OCI-LY7 (cell line): ENCODE measurements at regions of chr18 and their contacts with region 1.

Region 1: GRCh38 chr18:52288403-52289004 is 51.5 kb upstream of the DCC start:
- DNase-seq: peak; percentile 19
- H3K4me3 ChIP-seq: no peak overlapping the region
- H3K27ac ChIP-seq: no peak overlapping the region
- H3K4me1 ChIP-seq: no peaks in the 10 kb centered on the region
- CTCF ChIP-seq: peak; percentile 77

Region 2: GRCh38 chr18:51668101-51668500 is 620.4 kb before region 1 on chr18:
- CTCF ChIA-PET with region 1: no interaction called
- POLR2A ChIA-PET with region 1: no interaction called
- intact Hi-C with region 1: loop called (anchors 2 kb)
- DNase-seq: peak; percentile 45
- H3K4me3 ChIP-seq: no peak overlapping the region
- H3K27ac ChIP-seq: no peak overlapping the region
- H3K4me1 ChIP-seq: no peaks in the 10 kb centered on the region
- CTCF ChIP-seq: peak; percentile 77

Region 3: DNA sequence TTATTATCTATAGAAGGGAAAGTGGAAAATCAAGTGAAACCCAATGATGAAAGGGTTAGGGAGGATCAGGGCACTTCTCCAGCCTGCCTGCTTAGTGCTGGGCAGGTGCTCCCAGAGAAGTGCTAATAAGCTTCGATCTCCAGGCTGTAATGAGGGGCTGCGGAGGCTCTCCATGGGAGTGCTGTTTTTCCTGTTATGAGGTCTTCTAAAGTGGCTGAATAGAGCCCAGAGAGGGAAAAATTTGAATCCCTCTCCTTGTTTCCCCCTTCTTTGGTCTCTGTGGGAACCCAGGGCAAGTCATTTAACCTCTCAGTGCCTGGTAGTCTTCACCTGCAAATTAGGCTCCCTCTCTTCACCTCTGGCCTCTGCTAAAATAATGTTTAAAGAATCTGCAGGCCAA is 300.2 kb before region 1 on chr18:
- CTCF ChIA-PET with region 1: no interaction called
- POLR2A ChIA-PET with region 1: no interaction called
- intact Hi-C with region 1: no loop called
- DNase-seq: no peak
- H3K4me3 ChIP-seq: no peak overlapping the region
- H3K27ac ChIP-seq: no peak overlapping the region
- H3K4me1 ChIP-seq: no peaks in the 10 kb centered on the region
- CTCF ChIP-seq: no peak

Region 4: DNA sequence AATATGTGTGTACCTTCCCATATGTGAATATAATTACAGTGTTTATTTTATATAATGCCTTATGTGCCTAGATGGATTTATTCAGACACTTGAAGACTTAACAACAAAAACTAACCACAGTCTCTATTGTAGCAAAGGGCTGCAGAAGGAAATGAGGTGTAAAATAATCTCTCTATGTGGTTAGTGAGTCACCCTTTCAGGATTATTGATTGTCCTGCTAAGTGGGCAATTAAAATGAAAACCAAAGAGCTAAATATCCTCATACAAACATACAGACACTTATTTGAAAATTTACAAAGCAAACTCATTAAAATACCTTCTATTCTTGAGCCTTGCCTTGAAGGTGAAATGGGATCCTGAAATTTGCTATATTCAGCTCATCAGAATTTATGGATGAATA is 23.8 kb after region 1 on chr18:
- CTCF ChIA-PET with region 1: no interaction called
- POLR2A ChIA-PET with region 1: no interaction called
- intact Hi-C with region 1: no loop called
- DNase-seq: no peak
- H3K4me3 ChIP-seq: no peak overlapping the region
- H3K27ac ChIP-seq: no peak overlapping the region
- H3K4me1 ChIP-seq: no peaks in the 10 kb centered on the region
- CTCF ChIP-seq: no peak